SK-N-SH (cell line): ENCODE measurements at regions of chr2 and their contacts with region 1.

Region 1: DNA sequence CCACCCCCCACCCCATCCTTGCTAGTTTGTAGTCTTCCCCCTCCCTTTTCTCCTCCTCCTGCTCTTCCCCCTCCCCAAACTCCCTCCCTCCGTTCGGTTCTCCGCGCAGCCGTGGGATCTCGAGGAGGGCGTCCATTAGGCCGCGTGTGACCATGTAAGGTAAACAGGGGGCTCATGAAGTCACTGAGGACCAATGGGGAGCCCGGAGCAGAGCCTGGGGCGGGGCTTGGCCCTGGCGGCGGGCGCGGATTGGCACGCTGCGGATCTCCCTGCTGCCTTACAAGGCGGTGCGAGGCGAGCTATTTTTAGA is 246 bp upstream of the KLF7 start:
- DNase-seq: peak; percentile 94
- H3K4me3 ChIP-seq: peak overlapping the region; percentile 91 to 93; a peak in 3 of 4 replicates
- H3K27ac ChIP-seq: peak overlapping the region; percentile 97 to 99
- H3K4me1 ChIP-seq: peaks cover 9 to 25% of the 10 kb centered on the region in 2 experiments; a peak in 2 of 4 replicates
- H3K27me3 ChIP-seq: no peaks in the 10 kb centered on the region
- CTCF ChIP-seq: no peak
- EP300 ChIP-seq: peak in 1 of 2 experiments; percentile 32; a peak in 1 of 4 replicates
- RAD21 ChIP-seq: no peak

Region 2: DNA sequence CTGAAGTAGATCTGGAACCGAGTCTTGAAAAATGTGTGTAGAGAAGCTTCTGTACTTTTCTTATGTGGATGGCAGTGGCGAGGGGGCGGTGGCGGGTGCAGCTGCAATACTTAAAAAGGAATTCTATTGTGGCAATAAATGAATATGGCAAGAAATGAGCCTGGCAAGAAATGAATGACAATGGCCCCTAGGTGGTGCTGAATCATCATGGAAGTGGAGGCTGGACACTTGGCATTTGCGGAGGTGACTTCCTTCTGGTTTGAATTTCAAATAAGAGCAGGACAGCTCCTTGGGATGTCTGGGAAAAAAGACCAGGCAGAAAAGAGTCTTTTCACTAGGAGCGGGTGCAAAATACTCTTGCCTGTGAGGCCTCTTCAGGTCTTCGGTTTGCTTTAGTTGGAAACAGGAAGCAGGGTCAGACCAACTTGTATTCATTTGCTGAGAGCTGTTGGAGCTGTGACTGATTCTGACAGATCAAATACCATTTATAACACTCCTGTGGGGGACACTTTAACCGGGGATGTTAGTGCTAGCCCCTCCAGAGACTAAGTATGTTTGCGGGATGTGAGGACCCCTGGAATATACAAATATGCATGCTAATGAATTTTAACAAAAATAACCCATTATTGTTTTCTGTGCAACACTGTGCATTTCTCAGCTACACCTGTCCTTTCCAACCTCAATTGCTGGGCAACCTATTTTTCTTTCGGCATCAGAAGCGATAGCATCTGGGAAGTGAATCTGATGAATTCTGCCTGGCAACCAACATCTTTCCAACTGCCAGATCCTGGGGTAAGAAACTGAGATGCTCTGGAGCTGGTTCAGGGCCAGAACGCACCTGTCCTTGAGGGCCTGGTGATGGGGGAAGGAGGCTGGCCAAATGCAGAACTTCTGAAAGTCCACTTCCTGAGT is 365.2 kb before region 1 on chr2:
- CTCF ChIA-PET with region 1: interaction called, 14 read pairs
- POLR2A ChIA-PET with region 1: interaction called, 16 read pairs
- DNase-seq: peak; percentile 52
- H3K4me3 ChIP-seq: no peak overlapping the region; a peak in 1 of 4 replicates
- H3K27ac ChIP-seq: peak overlapping the region in 1 of 2 experiments; percentile 28; a peak in 1 of 4 replicates
- H3K4me1 ChIP-seq: peaks cover 0 to 27% of the 10 kb centered on the region in 2 experiments; a peak in 1 of 4 replicates
- H3K27me3 ChIP-seq: no peaks in the 10 kb centered on the region
- CTCF ChIP-seq: peak; percentile 78
- EP300 ChIP-seq: no peak
- RAD21 ChIP-seq: peak; percentile 95

Region 3: GRCh38 chr2:207060378-207060777 is 105.6 kb before region 1 on chr2:
- CTCF ChIA-PET with region 1: no interaction called
- POLR2A ChIA-PET with region 1: no interaction called
- DNase-seq: no peak
- H3K4me3 ChIP-seq: no peak overlapping the region
- H3K27ac ChIP-seq: no peak overlapping the region
- H3K4me1 ChIP-seq: peaks cover 0 to under 1% of the 10 kb centered on the region in 2 experiments; a peak in 1 of 4 replicates
- H3K27me3 ChIP-seq: no peaks in the 10 kb centered on the region
- CTCF ChIP-seq: no peak
- EP300 ChIP-seq: no peak
- RAD21 ChIP-seq: no peak

Region 4: DNA sequence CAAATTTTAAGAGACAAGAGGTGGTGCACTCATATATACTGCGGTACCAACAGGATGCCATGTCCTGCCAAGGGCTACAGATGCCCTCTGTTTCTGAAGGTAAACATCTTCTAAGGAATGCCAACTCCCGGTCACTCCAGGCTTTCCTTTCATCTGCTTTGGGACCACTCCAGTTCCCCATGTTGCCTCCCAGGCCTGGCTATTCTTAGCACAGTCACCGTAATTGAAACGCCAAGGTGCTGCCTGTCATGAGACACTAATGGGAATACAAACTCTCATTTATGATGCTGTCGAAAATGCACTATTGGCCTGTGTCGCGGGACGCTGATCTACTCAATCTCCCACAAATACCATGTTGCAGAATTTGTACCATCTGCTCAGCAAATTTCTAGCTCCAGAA is 79.9 kb before region 1 on chr2:
- CTCF ChIA-PET with region 1: interaction called, 6 read pairs
- POLR2A ChIA-PET with region 1: interaction called, 18 read pairs
- DNase-seq: no peak
- H3K4me3 ChIP-seq: no peak overlapping the region
- H3K27ac ChIP-seq: peak overlapping the region in 1 of 2 experiments; percentile 99; a peak in 2 of 4 replicates
- H3K4me1 ChIP-seq: peaks cover 6 to 63% of the 10 kb centered on the region in 2 experiments; a peak in 3 of 4 replicates
- H3K27me3 ChIP-seq: no peaks in the 10 kb centered on the region
- CTCF ChIP-seq: no peak
- EP300 ChIP-seq: no peak
- RAD21 ChIP-seq: no peak

Region 5: DNA sequence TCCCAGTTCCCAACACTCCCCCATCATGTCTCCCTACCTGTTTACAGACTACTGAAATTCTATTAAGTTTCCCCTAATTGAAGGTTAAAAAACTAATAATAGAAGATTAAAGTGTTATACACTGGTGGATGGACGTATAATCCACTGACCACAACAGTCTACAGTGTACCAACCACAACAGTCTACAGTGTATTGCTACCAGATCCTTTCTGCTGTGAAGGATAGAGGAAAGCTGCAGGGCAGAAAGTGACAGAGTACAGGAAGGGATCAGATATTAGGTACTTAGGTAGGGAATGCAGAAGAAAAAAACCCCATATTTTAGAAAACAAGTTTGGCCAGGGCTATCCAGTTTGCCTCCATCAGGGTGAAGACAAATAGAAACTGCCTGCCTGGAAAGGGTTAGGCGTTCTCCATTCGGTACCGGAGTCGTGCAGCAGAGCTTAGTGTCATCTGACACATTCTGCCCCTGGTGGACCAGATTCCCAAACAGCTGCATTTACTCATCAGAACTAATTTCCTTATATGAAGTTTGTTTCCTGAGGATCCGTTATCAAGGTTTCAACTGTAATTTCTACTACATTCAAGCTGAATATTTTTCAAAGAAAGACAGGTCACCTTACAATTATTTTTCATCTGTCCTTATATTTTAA is 50.2 kb before region 1 on chr2:
- CTCF ChIA-PET with region 1: interaction called, 6 read pairs
- POLR2A ChIA-PET with region 1: interaction called, 13 read pairs
- DNase-seq: peak; percentile 39
- H3K4me3 ChIP-seq: no peak overlapping the region
- H3K27ac ChIP-seq: peak overlapping the region in 1 of 2 experiments; percentile 90; a peak in 2 of 4 replicates
- H3K4me1 ChIP-seq: peaks cover 11 to 55% of the 10 kb centered on the region in 2 experiments
- H3K27me3 ChIP-seq: no peaks in the 10 kb centered on the region
- CTCF ChIP-seq: no peak
- EP300 ChIP-seq: no peak
- RAD21 ChIP-seq: peak; percentile 38; the same call in 1 of the 2 replicates

Region 6: DNA sequence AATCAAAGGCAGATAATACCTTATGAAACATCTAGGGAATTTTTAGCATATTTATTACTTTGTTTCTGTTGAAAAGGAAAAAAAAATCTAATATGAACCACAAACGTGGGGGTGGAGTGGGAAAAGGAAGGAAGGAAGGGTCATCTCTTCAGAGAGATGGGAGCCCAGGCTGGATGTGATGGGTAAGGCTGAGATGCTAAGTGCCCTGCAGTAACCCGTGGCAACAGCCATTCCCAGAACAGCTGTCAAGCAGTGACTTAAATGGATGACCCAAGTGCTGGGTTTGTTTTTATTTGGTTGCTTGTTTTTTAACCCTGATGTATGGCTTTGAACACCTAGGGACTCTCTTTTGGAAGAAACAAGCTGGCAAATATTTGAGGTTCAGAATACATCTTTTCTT is 50.5 kb after region 1 on chr2:
- CTCF ChIA-PET with region 1: no interaction called
- POLR2A ChIA-PET with region 1: no interaction called
- DNase-seq: no peak
- H3K4me3 ChIP-seq: no peak overlapping the region
- H3K27ac ChIP-seq: no peak overlapping the region
- H3K4me1 ChIP-seq: peaks cover 5 to 19% of the 10 kb centered on the region in 2 experiments; a peak in 2 of 4 replicates
- H3K27me3 ChIP-seq: no peaks in the 10 kb centered on the region
- CTCF ChIP-seq: no peak
- EP300 ChIP-seq: no peak
- RAD21 ChIP-seq: no peak

Region 7: GRCh38 chr2:207341804-207342203 is 175.8 kb after region 1 on chr2:
- CTCF ChIA-PET with region 1: no interaction called
- POLR2A ChIA-PET with region 1: interaction called, 12 read pairs
- DNase-seq: no peak
- H3K4me3 ChIP-seq: no peak overlapping the region
- H3K27ac ChIP-seq: peak overlapping the region in 1 of 2 experiments; percentile 72; a peak in 2 of 4 replicates
- H3K4me1 ChIP-seq: peaks cover 0 to 21% of the 10 kb centered on the region in 2 experiments; a peak in 3 of 4 replicates
- H3K27me3 ChIP-seq: no peaks in the 10 kb centered on the region
- CTCF ChIP-seq: no peak
- EP300 ChIP-seq: no peak
- RAD21 ChIP-seq: peak; percentile 48

Region 8: DNA sequence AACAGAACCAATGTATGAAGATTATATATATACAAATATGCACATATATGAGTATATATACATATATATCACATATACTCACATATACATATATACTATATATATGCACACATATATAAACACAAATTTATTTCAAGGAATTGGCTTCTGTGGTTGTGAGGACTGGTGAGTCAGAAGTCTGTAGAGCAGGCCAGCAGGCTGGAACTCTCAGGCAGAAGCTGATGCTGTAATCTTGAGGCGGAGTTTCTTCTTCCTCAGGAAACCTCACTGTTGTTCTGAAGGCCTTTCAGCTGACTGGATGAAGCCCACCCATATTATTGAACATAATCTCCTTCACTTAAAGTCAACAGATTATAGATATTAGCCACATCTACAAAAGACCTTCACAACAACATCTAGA is 219.9 kb after region 1 on chr2:
- CTCF ChIA-PET with region 1: no interaction called
- POLR2A ChIA-PET with region 1: no interaction called
- DNase-seq: no peak
- H3K4me3 ChIP-seq: no peak overlapping the region
- H3K27ac ChIP-seq: no peak overlapping the region
- H3K4me1 ChIP-seq: no peaks in the 10 kb centered on the region
- H3K27me3 ChIP-seq: no peaks in the 10 kb centered on the region
- CTCF ChIP-seq: no peak
- EP300 ChIP-seq: no peak
- RAD21 ChIP-seq: no peak